Right ventricle myocardium inferior (tissue), 1 donor: ENCODE measurements at regions of chr20 and their contacts with region 1.

Region 1: GRCh38 chr20:45406259-45407066 is 1.6 kb upstream of the DBNDD2 start:
- DNase-seq: peak; percentile 85
- ATAC-seq: peak; percentile 64

Region 2: GRCh38 chr20:45344168-45344860 is 62.1 kb before region 1 on chr20:
- intact Hi-C with region 1: loop called (anchors 5 kb)
- DNase-seq: no peak
- ATAC-seq: no peak

Region 3: GRCh38 chr20:45373353-45374100 is 32.9 kb before region 1 on chr20:
- intact Hi-C with region 1: loop called (anchors 2 kb)
- DNase-seq: peak; percentile 92
- ATAC-seq: peak; percentile 88

Region 4: DNA sequence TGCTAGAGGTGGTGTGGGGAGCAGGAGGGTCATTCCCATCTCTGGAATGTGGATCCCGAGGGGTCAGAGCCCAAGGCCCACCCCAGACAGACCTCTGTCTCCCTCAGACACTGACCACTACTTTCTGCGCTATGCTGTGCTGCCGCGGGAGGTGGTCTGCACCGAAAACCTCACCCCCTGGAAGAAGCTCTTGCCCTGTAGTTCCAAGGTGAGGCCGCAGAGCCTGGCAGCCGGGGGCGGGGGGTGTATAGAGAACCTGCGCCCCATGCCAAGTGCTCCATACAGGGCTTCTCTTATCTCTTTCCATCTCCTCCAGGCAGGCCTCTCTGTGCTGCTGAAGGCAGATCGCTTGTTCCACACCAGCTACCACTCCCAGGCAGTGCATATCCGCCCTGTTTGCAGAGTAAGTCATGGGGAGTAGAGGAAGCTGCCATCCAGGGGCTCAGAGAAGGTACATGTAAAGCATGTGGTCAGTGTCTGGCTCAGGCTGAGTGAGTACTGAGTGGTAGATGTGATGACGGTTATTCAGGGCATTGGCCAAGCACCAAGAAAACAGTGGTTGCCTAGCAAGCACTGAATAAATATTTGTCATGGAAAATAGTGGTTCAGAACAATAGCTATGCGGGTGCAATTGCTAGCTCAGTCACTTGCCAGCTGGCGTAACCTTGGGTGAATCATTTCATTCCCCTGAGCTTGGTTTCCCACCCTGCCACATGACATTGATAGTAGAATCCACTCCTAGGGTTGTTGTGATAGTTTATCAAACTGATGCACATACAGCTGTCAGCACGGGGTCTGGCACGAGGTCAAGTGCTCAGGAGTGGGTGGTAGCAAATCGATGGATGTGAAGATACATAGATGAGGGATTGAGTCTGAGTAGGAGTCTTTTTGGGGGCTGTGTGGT is 13.0 kb after region 1 on chr20:
- intact Hi-C with region 1: loop called (anchors 1 kb)
- DNase-seq: no peak
- ATAC-seq: peak; percentile 89